ENCODE measurements at regions of chr4 and their contacts with region 1.

Region 1: DNA sequence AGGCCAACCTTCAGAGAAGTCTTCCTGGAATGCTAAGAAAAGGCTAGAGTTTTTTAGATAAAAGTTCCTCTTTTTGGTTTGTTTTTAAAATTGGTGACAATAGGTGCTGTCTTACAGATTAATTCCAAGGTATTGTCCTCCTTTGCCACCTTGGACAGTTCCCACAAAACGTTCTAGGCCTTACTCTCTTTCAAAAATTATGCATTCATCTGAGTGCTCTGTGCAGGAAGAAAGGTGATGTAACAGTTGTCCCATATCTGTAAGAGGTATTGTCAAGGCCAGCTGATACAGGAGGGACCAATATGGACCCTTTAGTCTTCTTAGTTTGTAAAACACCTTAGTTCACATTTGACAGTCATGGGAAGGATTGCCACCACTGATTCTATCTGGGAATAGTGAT is 15.9 kb upstream of the CXCL5 start:
- DNase-seq: no peak
- ATAC-seq: no peak
- H3K4me3 ChIP-seq: no peak overlapping the region
- H3K4me3 Mint-ChIP-seq: no peak overlapping the region
- H3K27ac ChIP-seq: no peak overlapping the region
- H3K27ac Mint-ChIP-seq: no peak overlapping the region
- H3K4me1 ChIP-seq: no peaks in the 10 kb centered on the region
- H3K4me1 Mint-ChIP-seq: peaks cover 11% of the 10 kb centered on the region
- H3K27me3 ChIP-seq: no peaks in the 10 kb centered on the region
- H3K27me3 Mint-ChIP-seq: no peaks in the 10 kb centered on the region
- CTCF ChIP-seq: no peak

Region 2: GRCh38 chr4:73345399-73345975 is 668.8 kb before region 1 on chr4:
- CTCF ChIA-PET with region 1: no interaction called
- POLR2A ChIA-PET with region 1: no interaction called
- intact Hi-C with region 1: loop called in 1 of 2 experiments (anchors 5 kb)
- DNase-seq: no peak
- ATAC-seq: no peak
- H3K4me3 ChIP-seq: no peak overlapping the region
- H3K4me3 Mint-ChIP-seq: no peak overlapping the region
- H3K27ac ChIP-seq: no peak overlapping the region
- H3K27ac Mint-ChIP-seq: no peak overlapping the region
- H3K4me1 ChIP-seq: no peaks in the 10 kb centered on the region
- H3K4me1 Mint-ChIP-seq: no peaks in the 10 kb centered on the region
- H3K27me3 ChIP-seq: no peaks in the 10 kb centered on the region
- H3K27me3 Mint-ChIP-seq: no peaks in the 10 kb centered on the region
- CTCF ChIP-seq: no peak

Measured in CD8-positive, alpha-beta T cell (primary cell).